OCI-LY7 (cell line): ENCODE measurements at regions of chr1 and their contacts with region 1.

Region 1: DNA sequence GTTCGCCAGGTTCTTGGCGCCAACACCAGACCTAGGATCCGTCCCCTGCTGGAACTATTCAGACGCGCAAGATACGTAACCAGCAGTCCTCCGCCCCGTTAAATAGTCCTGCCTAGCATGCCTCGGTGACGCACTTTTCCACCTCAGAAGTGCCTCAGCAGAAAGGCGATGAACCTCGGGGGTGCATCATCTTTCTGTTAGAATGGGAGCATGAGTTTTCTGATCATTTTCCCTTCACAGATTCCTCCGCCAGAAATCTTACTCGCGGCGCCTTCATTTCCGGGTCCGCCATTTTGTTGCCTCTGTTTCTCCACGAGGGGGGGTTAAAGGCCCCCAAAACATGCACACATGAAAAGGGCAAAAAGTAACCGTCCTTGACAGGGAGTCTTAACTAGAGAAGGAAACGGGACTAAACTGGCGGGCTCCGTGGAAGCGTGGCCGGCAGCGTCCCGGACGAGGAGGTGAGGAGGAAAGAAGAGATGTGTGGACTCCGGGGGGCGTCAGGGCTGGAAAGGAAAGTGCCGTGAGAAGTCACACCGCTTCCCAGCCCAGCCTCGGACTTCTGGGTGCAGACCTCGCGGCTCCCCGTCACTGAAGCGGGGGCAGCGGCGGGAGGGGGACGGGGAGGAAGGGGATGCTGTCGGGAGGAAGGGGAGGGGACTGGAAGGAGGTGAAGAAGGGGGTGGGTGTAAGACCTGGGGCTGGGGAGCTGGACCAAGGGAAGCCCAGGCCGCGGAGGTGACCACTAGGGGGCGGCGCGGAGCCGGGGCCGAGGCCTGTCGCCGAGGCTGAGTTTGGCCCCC is at the start of gene GABPB2:
- DNase-seq: peak; percentile 91
- H3K4me3 ChIP-seq: peak within 1 kb of the TSS; percentile 83
- H3K27ac ChIP-seq: peak within 1 kb of the TSS; percentile 94
- H3K4me1 ChIP-seq: peaks cover 21% of the 10 kb centered on the region
- CTCF ChIP-seq: peak; percentile 86
- total RNA-seq, gene GABPB2: 14.7 and 17.2 TPM in 2 replicates

Region 2: DNA sequence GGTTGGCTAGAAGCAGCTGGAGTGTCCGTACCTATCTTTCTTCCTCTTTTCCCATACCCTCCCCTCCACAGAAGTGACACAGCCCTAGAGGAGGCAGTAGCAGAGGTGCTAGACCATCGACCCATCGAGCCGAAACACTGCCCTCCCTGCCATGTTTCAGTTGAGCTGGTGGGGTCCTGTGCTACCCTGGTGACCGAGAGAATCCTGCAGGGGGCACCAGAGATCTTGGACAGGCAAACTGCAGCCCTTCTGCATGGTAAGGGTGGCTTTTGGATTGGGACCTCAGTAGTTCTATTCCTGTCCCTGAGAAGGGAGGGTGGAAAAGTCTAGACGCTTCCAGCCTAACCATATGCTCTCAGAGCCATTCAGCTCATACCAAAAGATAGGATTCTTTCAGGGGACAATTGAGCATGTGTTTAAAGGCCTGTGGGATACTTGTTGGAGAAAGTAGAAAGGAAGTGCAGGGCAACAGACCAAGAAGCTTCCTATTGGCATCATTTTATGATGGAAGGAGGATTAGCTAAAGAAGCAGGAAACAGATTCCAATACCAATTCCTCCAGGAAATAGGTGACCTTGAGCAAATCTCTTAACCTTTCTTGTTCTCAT is 46.0 kb before region 1 on chr1:
- CTCF ChIA-PET with region 1: no interaction called
- POLR2A ChIA-PET with region 1: interaction called, 3 read pairs
- intact Hi-C with region 1: loop called (anchors 1 kb)
- DNase-seq: peak; percentile 67
- H3K4me3 ChIP-seq: no peak overlapping the region
- H3K27ac ChIP-seq: no peak overlapping the region
- H3K4me1 ChIP-seq: no peaks in the 10 kb centered on the region
- CTCF ChIP-seq: peak; percentile 87

Region 3: DNA sequence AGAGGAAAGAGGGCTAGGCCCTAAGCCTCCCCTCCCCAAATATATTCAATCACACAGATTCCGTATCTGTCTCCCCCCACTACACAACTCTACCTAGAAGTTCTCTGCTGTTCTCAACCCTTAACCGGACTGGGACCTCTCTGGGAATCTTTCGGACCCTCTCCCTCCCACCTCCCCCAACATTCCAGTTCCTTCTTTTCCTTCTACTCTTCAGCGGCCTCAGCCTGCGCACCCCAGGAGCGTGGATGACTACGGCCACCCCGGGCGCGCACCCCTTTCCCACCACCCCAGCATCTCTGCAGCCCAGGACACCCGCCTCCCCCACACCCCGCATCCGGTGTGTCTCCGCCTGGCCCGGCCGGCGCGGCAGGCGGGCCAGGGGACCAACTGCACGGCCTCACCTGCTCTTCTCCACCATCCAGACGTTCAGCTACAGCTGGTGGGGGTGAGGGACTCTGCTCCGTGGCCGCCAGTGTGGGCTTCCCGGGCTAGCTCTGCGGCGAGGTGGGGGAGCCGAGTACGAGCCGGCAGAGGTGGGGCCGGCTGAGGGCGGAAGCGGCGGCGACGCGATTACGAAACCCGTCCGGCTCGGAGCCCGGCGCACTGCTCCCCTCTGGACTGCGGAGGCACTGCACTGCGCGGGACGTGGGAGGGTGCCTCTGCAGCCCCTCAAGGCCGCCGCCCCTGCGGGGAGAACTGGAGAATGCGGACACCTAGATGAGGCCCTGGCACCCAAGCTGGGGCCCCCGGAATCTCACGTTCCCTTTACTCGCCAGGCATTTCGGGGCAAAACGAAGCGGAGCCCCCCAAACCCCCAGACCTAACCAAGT is 11.4 kb before region 1 on chr1 and contains the start of gene CDC42SE1:
- CTCF ChIA-PET with region 1: interaction called, 6 read pairs
- POLR2A ChIA-PET with region 1: interaction called, 8 read pairs
- intact Hi-C with region 1: loop called (anchors 1 kb)
- DNase-seq: peak; percentile 94
- H3K4me3 ChIP-seq: peak within 1 kb of the TSS; percentile 92
- H3K27ac ChIP-seq: peak within 1 kb of the TSS; percentile 68
- H3K4me1 ChIP-seq: peaks cover 38% of the 10 kb centered on the region
- CTCF ChIP-seq: peak; percentile 80
- total RNA-seq, gene CDC42SE1: 44.1 and 48.2 TPM in 2 replicates

Region 4: GRCh38 chr1:151156515-151156819 is 85.8 kb after region 1 on chr1 and contains the start of gene TNFAIP8L2:
- CTCF ChIA-PET with region 1: interaction called, 7 read pairs
- POLR2A ChIA-PET with region 1: no interaction called
- intact Hi-C with region 1: loop called (anchors 1 kb)
- DNase-seq: peak; percentile 78
- H3K4me3 ChIP-seq: peak within 1 kb of the TSS; percentile 76
- H3K27ac ChIP-seq: peak within 1 kb of the TSS; percentile 57
- H3K4me1 ChIP-seq: peaks cover 38% of the 10 kb centered on the region
- CTCF ChIP-seq: no peak
- total RNA-seq, gene TNFAIP8L2: 7.7 and 12.5 TPM in 2 replicates